CD4-positive, alpha-beta T cell (primary cell): ENCODE measurements at regions of chr22 and their contacts with region 1.

Region 1: GRCh38 chr22:40203572-40203971 is 25.8 kb downstream of the TNRC6B start:
- DNase-seq: peak in 8 of 14 experiments; percentile 25 to 71 (median 46)
- ATAC-seq: peak; percentile 96
- H3K4me3 ChIP-seq: no peak overlapping the region
- H3K4me3 Mint-ChIP-seq: peak overlapping the region; percentile 57
- H3K27ac ChIP-seq: peak overlapping the region; percentile 45 to 48
- H3K27ac Mint-ChIP-seq: peak overlapping the region; percentile 91
- H3K4me1 ChIP-seq: peaks cover 29% of the 10 kb centered on the region
- H3K4me1 Mint-ChIP-seq: peaks cover 86% of the 10 kb centered on the region
- H3K27me3 ChIP-seq: no peaks in the 10 kb centered on the region
- H3K27me3 Mint-ChIP-seq: no peaks in the 10 kb centered on the region
- CTCF ChIP-seq: no peak

Region 2: GRCh38 chr22:40215266-40215665 is 11.7 kb after region 1 on chr22:
- CTCF ChIA-PET with region 1: interaction called, 3 read pairs
- POLR2A ChIA-PET with region 1: interaction called, 3 read pairs
- intact Hi-C with region 1: loop called in 1 of 2 experiments (anchors 2 kb)
- DNase-seq: peak in 3 of 14 experiments; percentile 36 to 50 (median 49)
- ATAC-seq: no peak
- H3K4me3 ChIP-seq: no peak overlapping the region
- H3K4me3 Mint-ChIP-seq: peak overlapping the region; percentile 71
- H3K27ac ChIP-seq: peak overlapping the region; percentile 50 to 59
- H3K27ac Mint-ChIP-seq: peak overlapping the region; percentile 91
- H3K4me1 ChIP-seq: peaks cover 88% of the 10 kb centered on the region
- H3K4me1 Mint-ChIP-seq: peaks cover 90% of the 10 kb centered on the region
- H3K27me3 ChIP-seq: no peaks in the 10 kb centered on the region
- H3K27me3 Mint-ChIP-seq: no peaks in the 10 kb centered on the region
- CTCF ChIP-seq: no peak

Region 3: GRCh38 chr22:40224702-40225101 is 21.1 kb after region 1 on chr22:
- CTCF ChIA-PET with region 1: no interaction called
- POLR2A ChIA-PET with region 1: no interaction called
- intact Hi-C with region 1: loop called in 1 of 2 experiments (anchors 2 kb)
- DNase-seq: peak in 11 of 14 experiments; percentile 30 to 70 (median 53)
- ATAC-seq: peak; percentile 98
- H3K4me3 ChIP-seq: no peak overlapping the region
- H3K4me3 Mint-ChIP-seq: peak overlapping the region; percentile 69
- H3K27ac ChIP-seq: no peak overlapping the region
- H3K27ac Mint-ChIP-seq: peak overlapping the region; percentile 81
- H3K4me1 ChIP-seq: peaks cover 56% of the 10 kb centered on the region
- H3K4me1 Mint-ChIP-seq: peaks cover 66% of the 10 kb centered on the region
- H3K27me3 ChIP-seq: no peaks in the 10 kb centered on the region
- H3K27me3 Mint-ChIP-seq: no peaks in the 10 kb centered on the region
- CTCF ChIP-seq: no peak

Region 4: DNA sequence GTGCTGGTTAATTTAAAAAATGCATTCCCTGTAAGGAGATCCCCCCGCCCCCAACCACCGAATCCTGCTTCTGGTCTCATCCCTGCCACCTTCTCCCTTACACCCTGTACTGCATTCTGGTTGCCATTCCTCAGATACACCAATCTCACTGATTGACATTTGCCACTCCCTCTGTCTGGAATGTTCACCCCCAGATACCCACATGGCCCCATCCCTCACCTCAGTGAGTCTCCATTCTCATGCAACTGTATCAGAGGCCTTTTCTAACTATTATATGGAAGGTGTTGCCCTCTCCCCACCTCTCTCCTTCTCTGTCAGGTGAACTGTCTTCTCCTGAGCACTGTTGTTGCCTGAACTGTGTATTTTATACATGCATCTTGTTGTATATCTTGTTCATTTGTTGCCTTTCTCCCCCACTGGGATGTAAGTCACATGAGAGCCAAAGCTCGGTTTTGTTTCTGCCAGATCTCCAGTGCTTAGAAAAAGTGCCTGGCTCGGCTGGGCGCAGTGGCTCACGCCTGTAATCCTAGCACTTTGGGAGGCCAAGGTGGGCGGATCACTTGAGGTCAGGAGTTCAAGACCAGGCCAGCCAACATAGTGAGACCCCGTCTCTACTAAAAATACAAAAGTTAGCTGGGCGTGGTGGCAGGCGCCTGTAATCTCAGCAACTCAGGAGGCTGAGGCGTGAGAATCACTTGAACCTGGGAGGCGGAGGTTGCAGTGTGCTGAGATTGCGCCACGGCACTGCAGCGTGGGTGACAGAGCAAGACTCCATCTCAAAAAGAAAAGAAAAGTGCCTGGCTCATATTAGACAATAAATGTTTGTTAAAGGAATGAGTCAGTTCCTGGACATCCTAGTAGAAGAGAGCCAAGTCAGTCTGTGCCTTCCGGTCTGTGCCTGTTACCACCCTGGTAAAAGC is 35.1 kb after region 1 on chr22:
- CTCF ChIA-PET with region 1: interaction called, 3 read pairs
- POLR2A ChIA-PET with region 1: interaction called, 3 read pairs
- intact Hi-C with region 1: loop called (anchors 1 to 5 kb)
- DNase-seq: peak in 3 of 14 experiments; percentile 31 to 40 (median 34)
- ATAC-seq: peak; percentile 13
- H3K4me3 ChIP-seq: no peak overlapping the region
- H3K4me3 Mint-ChIP-seq: peak overlapping the region; percentile 64
- H3K27ac ChIP-seq: peak overlapping the region; percentile 7 to 22
- H3K27ac Mint-ChIP-seq: peak overlapping the region; percentile 85
- H3K4me1 ChIP-seq: peaks cover 71% of the 10 kb centered on the region
- H3K4me1 Mint-ChIP-seq: peaks cover 98% of the 10 kb centered on the region
- H3K27me3 ChIP-seq: no peaks in the 10 kb centered on the region
- H3K27me3 Mint-ChIP-seq: no peaks in the 10 kb centered on the region
- CTCF ChIP-seq: no peak

Region 5: DNA sequence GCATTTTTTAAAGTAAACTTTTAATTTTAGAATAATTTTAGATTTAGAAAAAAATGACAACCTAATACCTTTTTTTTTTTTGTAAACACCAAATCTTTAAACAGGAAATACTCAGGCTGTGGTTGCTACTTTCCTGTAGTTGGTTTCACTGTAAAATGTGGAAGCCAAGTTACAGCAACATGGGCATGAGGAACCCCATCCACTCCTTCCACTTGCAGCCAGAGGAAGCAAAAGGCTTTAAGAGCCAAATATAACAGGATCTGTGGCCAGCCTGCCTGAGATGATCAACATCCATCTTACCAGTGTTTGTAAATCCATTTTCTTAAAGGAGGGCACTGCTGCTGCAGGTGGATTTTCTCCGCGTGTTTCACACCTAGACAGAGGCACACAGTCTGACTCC is 40.3 kb after region 1 on chr22:
- CTCF ChIA-PET with region 1: interaction called, 3 read pairs
- POLR2A ChIA-PET with region 1: interaction called, 3 read pairs
- intact Hi-C with region 1: loop called (anchors 1 to 5 kb)
- DNase-seq: peak in 4 of 14 experiments; percentile 20 to 71 (median 57)
- ATAC-seq: no peak
- H3K4me3 ChIP-seq: peak overlapping the region; percentile 9
- H3K4me3 Mint-ChIP-seq: peak overlapping the region; percentile 80
- H3K27ac ChIP-seq: peak overlapping the region in 1 of 2 donors; percentile 18
- H3K27ac Mint-ChIP-seq: peak overlapping the region; percentile 86
- H3K4me1 ChIP-seq: peaks cover 82% of the 10 kb centered on the region
- H3K4me1 Mint-ChIP-seq: peaks cover 93% of the 10 kb centered on the region
- H3K27me3 ChIP-seq: no peaks in the 10 kb centered on the region
- H3K27me3 Mint-ChIP-seq: no peaks in the 10 kb centered on the region
- CTCF ChIP-seq: no peak

Region 6: GRCh38 chr22:40265783-40266182 is 62.2 kb after region 1 on chr22:
- CTCF ChIA-PET with region 1: no interaction called
- POLR2A ChIA-PET with region 1: no interaction called
- intact Hi-C with region 1: no loop called
- DNase-seq: peak in 3 of 14 experiments; percentile 26 to 29 (median 27)
- ATAC-seq: no peak
- H3K4me3 ChIP-seq: no peak overlapping the region
- H3K4me3 Mint-ChIP-seq: peak overlapping the region; percentile 0
- H3K27ac ChIP-seq: peak overlapping the region in 1 of 2 donors; percentile 46
- H3K27ac Mint-ChIP-seq: peak overlapping the region; percentile 47
- H3K4me1 ChIP-seq: peaks cover 38% of the 10 kb centered on the region
- H3K4me1 Mint-ChIP-seq: peaks cover 63% of the 10 kb centered on the region
- H3K27me3 ChIP-seq: no peaks in the 10 kb centered on the region
- H3K27me3 Mint-ChIP-seq: no peaks in the 10 kb centered on the region
- CTCF ChIP-seq: no peak

Region 7: DNA sequence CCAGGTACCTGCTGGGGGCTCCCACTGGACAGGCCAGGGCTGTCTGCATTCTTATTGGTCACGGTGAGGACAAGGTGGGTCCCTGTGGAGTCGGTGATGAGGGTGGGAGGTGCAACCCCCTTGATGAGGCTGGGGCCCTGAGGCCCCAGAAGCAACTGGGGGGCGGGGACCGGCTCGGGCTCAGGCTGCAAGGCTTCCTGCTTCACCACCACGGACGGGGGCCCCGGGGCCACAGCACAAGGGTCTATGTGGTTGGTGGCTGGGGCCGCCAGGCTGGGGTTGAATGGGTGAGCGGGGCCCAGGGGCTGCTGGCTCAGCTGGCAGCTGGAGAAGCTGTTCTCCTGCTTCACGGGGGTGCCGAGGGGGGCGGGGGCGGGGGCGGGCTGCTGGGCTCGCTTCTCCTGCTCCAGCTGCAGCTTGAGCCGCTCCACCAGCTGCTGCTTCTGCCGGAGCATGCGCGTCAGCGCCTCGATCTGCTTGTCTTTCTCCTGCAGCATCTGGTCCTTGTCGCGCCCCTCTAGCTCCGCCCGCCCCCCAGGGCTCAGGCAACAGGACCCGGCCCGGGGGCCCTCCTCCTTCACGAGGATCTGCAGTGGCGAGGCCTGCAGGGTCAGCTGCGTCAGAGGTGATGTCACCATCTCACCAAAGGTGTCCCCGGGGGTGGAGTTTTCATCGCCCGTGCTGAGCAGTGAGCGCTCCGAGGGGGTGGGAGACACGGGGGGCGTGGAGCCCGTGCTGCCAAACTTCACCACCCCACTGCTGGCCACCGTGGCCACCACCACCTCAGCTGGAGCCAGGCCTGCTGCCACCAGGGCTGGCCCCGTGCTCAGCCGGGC is 215.0 kb after region 1 on chr22:
- CTCF ChIA-PET with region 1: no interaction called
- POLR2A ChIA-PET with region 1: no interaction called
- intact Hi-C with region 1: no loop called
- DNase-seq: peak in 1 of 14 experiments; percentile 29
- ATAC-seq: peak; percentile 39
- H3K4me3 ChIP-seq: no peak overlapping the region
- H3K4me3 Mint-ChIP-seq: no peak overlapping the region
- H3K27ac ChIP-seq: peak overlapping the region in 1 of 2 donors; percentile 43
- H3K27ac Mint-ChIP-seq: peak overlapping the region; percentile 49
- H3K4me1 ChIP-seq: peaks cover 36% of the 10 kb centered on the region
- H3K4me1 Mint-ChIP-seq: peaks cover 41% of the 10 kb centered on the region
- H3K27me3 ChIP-seq: no peaks in the 10 kb centered on the region
- H3K27me3 Mint-ChIP-seq: no peaks in the 10 kb centered on the region
- CTCF ChIP-seq: no peak